ENCODE measurements at regions of chr11 and their contacts with region 1.

Region 1: GRCh38 chr11:131867457-131868257 is 497.2 kb downstream of the NTM start:
- H3K4me3 ChIP-seq: no peak overlapping the region
- H3K27ac ChIP-seq: no peak overlapping the region
- H3K4me1 ChIP-seq: no peaks in the 10 kb centered on the region; the same call in 1 of the 2 replicates
- CTCF ChIP-seq: peak; percentile 65; the same call in 1 of the 2 replicates

Region 2: DNA sequence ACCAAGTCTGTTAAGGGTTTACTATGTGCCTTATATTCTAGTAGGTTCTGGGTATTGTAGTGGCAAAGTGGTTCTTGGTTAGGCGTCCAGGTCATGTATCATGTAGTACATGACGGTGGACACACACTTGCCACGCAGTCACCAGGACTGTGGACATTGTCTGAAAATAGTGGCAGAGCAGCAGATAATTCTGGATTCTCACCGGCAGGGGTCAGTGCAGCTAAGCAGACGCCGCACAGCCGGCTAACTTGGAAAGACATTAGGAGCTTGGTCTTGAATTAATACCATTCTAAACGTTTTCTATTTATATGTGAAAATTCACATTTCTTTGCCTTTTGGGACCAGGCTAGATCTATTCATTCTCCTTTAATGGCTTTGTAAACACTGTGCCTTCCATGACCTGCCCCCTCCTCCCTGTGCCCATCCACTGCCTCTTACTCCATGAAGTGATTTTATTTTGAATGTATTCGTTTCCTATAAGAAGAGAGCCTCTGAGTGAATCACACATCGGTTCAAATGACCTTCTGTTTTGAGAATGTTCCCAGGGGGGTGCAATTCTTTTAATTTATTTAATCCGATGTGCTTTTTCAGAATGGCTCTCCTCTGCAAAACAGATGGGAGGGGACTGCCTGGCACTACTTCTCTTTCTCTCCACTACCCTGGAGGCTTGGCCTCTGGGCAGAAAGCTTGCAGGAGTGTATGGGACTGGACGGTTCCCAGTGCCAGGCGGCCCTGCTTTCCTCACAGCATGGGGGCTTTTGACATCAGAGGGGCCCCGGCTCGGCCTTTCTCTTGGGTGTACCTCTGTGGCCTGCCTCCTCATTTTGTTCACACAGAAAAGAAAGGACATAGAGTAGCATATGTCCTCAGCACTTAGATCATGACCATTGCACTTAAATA is 119.3 kb before region 1 on chr11:
- CTCF ChIA-PET with region 1: interaction called, 18 read pairs
- POLR2A ChIA-PET with region 1: no interaction called
- H3K4me3 ChIP-seq: no peak overlapping the region
- H3K27ac ChIP-seq: no peak overlapping the region
- H3K4me1 ChIP-seq: no peaks in the 10 kb centered on the region
- CTCF ChIP-seq: no peak

Region 3: GRCh38 chr11:131910523-131911387 is 43.1 kb after region 1 on chr11:
- CTCF ChIA-PET with region 1: interaction called, 33 read pairs
- POLR2A ChIA-PET with region 1: no interaction called
- H3K4me3 ChIP-seq: peak overlapping the region; percentile 42
- H3K27ac ChIP-seq: peak overlapping the region; percentile 39; the same call in 1 of the 2 replicates
- H3K4me1 ChIP-seq: no peaks in the 10 kb centered on the region
- CTCF ChIP-seq: no peak

Region 4: DNA sequence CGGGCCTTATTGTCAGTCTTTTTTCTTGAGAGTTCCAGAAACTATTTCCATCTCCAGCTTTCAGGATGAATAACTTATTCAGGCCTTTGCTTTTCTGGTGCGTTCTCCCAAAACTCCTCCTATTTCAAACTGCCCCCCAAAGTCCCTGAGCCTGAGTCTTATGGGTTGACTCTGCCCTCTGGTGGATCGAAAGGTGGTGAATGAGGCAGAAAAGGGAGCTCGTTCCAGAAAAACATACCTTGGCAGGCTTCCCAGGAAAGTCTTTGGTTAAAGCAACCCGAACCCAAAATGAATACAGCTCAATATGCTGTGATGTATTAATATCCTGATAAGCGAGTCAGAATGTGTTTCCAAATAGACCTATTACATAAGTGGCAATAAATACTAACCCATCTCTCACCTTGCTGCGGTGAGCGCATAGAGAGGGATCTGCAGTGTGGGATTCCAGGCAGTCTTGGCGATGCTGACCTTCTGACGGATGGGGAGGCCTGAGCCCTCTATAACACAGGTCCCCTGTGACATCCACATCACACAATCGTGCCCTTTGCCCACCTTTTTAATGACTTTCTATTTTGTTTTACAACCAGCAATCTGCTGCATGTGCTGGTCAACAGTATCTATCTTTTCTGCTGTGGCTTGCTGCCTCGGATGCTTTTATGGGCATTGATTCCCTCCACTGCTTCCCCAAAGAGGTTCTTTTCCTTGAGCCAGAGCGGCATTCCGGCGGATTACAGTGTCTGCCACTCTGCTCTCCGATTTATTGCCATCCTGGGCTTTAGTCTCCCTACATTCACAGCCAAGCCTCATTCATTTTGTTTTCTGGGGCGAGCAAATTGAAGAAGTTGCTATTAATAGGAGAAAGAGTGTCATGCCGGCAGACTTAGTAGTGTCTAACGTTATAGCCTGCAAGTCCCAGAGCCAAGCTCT is 259.6 kb after region 1 on chr11:
- CTCF ChIA-PET with region 1: interaction called, 14 read pairs
- POLR2A ChIA-PET with region 1: no interaction called
- H3K4me3 ChIP-seq: no peak overlapping the region
- H3K27ac ChIP-seq: no peak overlapping the region
- H3K4me1 ChIP-seq: 0 out of 2 replicates have a peak, but pooled peaks cover 3% of the 10 kb centered on the region
- CTCF ChIP-seq: no peak